H1 (cell line): ENCODE measurements at regions of chr16 and their contacts with region 1.

Region 1: GRCh38 chr16:74766729-74767128 is 7.9 kb downstream of the FA2H start:
- DNase-seq: peak in 1 of 2 experiments; percentile 67
- H3K4me3 ChIP-seq: no peak overlapping the region
- H3K27ac ChIP-seq: no peak overlapping the region
- H3K4me1 ChIP-seq: no peaks in the 10 kb centered on the region
- H3K27me3 ChIP-seq: no peaks in the 10 kb centered on the region; a peak in 1 of 7 replicates
- CTCF ChIP-seq: peak; percentile 61 to 78 (median 63)
- EP300 ChIP-seq: no peak
- POLR2A ChIP-seq: no peak
- RAD21 ChIP-seq: peak; percentile 62 to 72

Region 2: GRCh38 chr16:74785031-74785430 is 18.3 kb after region 1 on chr16:
- CTCF ChIA-PET with region 1: interaction called, 14 read pairs
- POLR2A ChIA-PET with region 1: interaction called, 3 read pairs
- DNase-seq: peak in 1 of 2 experiments; percentile 19
- H3K4me3 ChIP-seq: no peak overlapping the region
- H3K27ac ChIP-seq: no peak overlapping the region
- H3K4me1 ChIP-seq: no peaks in the 10 kb centered on the region
- H3K27me3 ChIP-seq: no peaks in the 10 kb centered on the region; a peak in 1 of 7 replicates
- CTCF ChIP-seq: peak in 2 of 3 experiments; percentile 6 to 12; a peak in 1 of 4 replicates
- EP300 ChIP-seq: no peak
- POLR2A ChIP-seq: no peak
- RAD21 ChIP-seq: peak; percentile 34 to 38; a peak in 2 of 4 replicates

Region 3: DNA sequence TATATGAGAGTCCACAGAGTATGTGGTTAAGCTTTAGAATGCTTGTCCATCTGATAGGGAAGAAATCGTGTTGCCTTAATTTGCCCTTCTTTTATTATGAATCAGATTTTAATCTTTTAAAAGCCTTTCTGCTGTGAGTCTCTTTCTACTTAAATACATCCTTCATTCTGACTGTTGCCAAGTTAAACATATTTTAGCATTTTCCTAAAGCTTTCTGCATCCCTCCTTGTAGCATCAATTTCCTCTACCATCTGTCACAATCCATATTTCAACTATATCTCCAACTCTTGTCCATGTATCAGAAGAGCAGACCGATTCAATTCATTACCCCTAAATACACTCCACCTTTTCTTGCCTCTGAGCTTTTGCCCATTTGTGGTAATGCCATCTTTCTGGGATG is 28.4 kb after region 1 on chr16:
- CTCF ChIA-PET with region 1: interaction called, 11 read pairs
- POLR2A ChIA-PET with region 1: no interaction called
- DNase-seq: no peak
- H3K4me3 ChIP-seq: no peak overlapping the region
- H3K27ac ChIP-seq: no peak overlapping the region
- H3K4me1 ChIP-seq: no peaks in the 10 kb centered on the region
- H3K27me3 ChIP-seq: no peaks in the 10 kb centered on the region
- CTCF ChIP-seq: no peak
- EP300 ChIP-seq: no peak
- POLR2A ChIP-seq: no peak
- RAD21 ChIP-seq: no peak